ENCODE measurements at regions of chr9 and their contacts with region 1.

Region 1: DNA sequence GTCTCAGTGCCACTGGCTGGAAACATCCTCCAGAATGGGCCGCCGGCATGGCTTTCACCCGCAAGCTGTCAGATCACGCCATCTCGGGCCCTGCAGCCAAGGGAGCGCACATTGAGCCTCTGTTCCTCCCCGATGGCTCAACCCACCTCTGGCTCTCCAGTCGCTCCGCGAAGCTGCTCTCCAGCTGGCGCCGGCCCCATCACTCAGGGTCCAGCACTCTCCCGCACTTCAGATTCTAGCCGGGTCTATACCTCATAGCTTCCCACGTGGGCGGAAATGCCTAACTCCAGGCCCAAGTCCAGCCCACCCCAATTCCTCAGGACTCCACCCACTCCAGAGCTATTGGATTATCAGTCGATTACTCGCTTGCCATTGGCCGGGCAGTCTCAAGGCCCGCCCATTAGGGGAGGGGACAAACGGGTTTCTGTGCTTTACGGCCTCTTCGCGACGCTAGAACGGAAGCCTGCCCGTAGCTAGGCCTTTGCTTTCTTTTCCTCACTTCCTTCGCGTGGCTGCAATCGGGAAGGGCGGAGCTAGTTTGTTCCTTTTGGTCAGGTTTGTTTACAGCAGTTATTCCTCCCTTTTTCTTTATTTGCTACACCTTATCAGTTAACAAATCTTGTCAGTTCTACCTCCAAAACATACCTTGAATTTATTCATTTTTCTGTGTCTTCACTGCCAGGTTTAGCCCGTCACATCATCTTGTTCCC is at the start of gene NOL6:
- DNase-seq: peak; percentile 99
- H3K4me3 Mint-ChIP-seq: peak within 1 kb of the TSS; percentile 95
- H3K27ac Mint-ChIP-seq: peak within 1 kb of the TSS; percentile 93
- H3K4me1 Mint-ChIP-seq: peaks cover 29% of the 10 kb centered on the region
- H3K27me3 Mint-ChIP-seq: no peaks in the 10 kb centered on the region
- total RNA-seq, gene NOL6: 38.2 to 38.6 TPM

Region 2: DNA sequence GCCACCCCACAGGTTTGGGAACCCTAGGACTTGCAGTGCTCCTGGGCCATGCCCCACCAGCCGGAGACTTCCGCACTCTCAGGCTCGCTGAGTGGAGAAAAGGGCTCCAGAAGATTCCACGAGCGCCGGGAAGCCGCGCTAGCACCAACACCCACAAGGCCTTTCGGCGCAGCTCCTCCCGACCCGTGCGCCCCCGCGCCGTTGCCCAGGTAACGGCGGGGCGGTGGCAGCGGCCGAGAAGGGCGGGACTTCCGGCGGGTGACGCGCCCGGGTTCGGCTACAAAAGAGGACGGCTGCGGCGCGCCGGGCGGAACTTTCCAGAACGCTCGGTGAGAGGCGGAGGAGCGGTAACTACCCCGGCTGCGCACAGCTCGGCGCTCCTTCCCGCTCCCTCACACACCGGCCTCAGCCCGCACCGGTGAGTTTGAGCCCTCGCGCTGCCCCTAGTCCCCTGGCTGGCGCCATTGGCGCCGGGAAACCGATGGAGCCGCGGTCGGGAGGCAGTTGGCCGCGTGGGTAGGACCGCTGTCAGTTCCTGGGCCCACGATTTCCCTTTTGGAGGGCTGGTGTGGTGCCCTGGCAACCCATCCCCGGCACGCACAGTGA is 448.7 kb before region 1 on chr9 and contains the start of gene DNAJA1:
- CTCF ChIA-PET with region 1: no interaction called
- intact Hi-C with region 1: loop called (anchors 1 kb)
- DNase-seq: peak; percentile 93
- H3K4me3 Mint-ChIP-seq: peak within 1 kb of the TSS; percentile 95
- H3K27ac Mint-ChIP-seq: peak within 1 kb of the TSS; percentile 94
- H3K4me1 Mint-ChIP-seq: peaks cover 75% of the 10 kb centered on the region
- H3K27me3 Mint-ChIP-seq: no peaks in the 10 kb centered on the region
- total RNA-seq, gene DNAJA1: 110 to 120 TPM

Region 3: DNA sequence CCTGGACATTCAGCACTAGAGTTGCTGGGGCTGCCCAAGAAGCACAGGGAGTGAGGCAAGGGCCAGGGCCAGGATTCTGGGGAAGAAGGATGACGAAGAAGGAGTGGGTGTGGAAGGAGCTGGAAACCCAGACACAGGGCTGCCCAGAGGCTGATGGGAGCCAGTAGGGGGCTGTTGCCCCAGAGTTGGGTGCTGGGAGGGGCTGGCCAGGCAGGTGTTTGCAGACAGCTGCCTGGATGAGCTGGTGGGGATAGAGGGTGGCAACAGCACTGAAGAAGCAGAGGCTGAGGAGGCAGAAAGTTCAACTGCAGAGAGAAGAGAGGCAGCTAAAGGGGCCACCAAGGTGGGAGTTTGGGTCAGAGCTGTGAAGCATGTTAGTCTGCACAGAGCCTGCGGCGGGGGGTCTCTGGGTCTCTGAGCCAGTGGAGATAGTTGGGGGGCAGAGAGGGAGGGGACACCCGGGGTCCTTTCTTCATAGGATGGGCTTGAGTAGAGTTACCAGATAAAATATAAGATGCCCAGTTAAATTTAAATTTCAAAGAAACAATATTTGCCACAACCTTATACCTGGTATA is 68.9 kb before region 1 on chr9:
- CTCF ChIA-PET with region 1: interaction called, 14 read pairs
- intact Hi-C with region 1: no loop called
- DNase-seq: no peak
- H3K4me3 Mint-ChIP-seq: no peak overlapping the region
- H3K27ac Mint-ChIP-seq: no peak overlapping the region
- H3K4me1 Mint-ChIP-seq: no peaks in the 10 kb centered on the region
- H3K27me3 Mint-ChIP-seq: no peaks in the 10 kb centered on the region

Region 4: DNA sequence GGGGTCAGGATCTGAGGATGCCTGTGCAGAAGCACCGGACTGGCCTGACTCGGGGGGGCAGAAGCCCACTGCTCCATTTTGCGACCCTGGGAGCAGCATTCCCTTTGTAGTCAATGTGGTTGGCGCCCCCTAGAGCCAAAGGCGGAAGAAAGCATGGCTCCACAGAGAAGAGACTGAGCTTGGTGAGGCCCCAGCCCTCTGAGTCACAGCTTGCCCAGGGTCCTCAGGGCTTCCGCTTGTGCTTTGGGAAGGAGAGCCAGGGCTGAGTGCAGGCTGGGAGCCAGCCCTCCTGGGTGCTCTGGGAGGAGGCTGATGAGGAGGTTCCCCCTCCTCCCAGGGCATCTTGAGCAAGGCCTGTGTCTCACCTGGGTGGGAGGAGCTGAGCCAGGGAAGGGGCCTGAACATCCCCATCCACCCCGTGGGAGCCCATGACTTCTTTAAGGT is 20.9 kb before region 1 on chr9:
- CTCF ChIA-PET with region 1: interaction called, 159 read pairs
- intact Hi-C with region 1: loop called (anchors 1 kb)
- DNase-seq: peak; percentile 82
- H3K4me3 Mint-ChIP-seq: no peak overlapping the region
- H3K27ac Mint-ChIP-seq: peak overlapping the region; percentile 83
- H3K4me1 Mint-ChIP-seq: peaks cover 72% of the 10 kb centered on the region
- H3K27me3 Mint-ChIP-seq: no peaks in the 10 kb centered on the region

Region 5: DNA sequence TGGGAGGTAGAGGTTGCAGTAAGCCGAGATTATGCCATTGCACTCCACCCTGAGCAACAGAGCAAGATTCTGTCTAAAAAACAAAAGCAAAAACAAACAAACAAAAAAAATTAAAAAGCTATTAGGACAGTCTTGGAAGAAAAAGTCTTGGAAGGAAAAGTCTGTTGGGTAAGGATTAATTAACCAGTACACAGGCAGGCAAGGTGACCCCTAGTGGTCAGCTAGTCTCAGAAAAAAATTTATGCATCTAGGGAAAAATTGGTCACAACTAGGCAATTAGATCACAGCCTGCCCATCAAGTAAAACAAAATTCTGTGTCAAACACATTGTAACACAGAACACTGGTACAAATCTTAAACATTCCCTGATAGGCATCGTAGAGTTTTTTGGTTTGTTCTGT is 43.6 kb after region 1 on chr9:
- CTCF ChIA-PET with region 1: interaction called, 3 read pairs
- intact Hi-C with region 1: loop called (anchors 2 kb)
- DNase-seq: peak; percentile 19
- H3K4me3 Mint-ChIP-seq: no peak overlapping the region
- H3K27ac Mint-ChIP-seq: no peak overlapping the region
- H3K4me1 Mint-ChIP-seq: no peaks in the 10 kb centered on the region
- H3K27me3 Mint-ChIP-seq: peaks cover 12% of the 10 kb centered on the region

Region 6: DNA sequence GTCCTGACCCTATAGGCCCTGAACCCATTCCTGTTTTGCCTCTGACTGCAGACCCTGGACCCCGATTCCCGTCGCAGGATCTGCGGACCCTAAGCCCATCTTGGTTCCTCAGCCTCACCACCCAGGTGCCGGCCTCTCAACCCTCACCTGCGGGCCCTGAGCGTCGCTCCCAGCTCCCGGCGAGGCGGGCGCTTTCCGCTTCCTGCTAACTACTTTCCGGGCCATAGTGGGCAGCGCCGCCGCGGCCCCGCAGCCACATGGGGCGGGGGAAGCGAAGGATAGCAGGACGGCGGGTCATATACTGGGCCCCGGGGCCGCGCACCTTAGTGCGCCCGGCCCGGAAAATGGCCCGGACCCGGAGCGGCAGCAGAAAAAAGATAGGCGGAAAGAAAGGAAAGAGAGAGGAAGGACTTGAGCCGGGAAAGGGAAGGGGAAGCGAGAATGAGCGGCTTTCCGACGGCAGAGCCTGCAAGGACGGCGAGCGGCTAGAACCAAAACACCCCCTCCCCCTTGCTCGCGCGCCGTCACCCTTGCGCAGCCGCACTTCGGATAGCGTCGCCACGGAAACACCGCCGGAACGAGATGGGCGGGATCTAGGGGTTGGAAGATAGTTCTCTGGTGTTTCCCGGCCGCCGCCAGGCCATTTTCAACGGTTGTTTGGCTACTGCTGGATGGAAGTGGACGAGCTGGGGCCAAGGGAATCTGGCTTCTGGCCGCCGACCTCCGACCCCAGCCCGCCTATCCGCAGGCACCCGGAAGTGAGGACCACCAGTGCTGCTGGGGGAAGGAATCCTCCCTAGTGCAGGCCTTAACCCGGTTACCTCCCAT is 652.6 kb after region 1 on chr9 and contains the start of gene DCAF12:
- CTCF ChIA-PET with region 1: no interaction called
- intact Hi-C with region 1: loop called (anchors 5 kb)
- DNase-seq: peak; percentile 94
- H3K4me3 Mint-ChIP-seq: peak within 1 kb of the TSS; percentile 93
- H3K27ac Mint-ChIP-seq: peak within 1 kb of the TSS; percentile 93
- H3K4me1 Mint-ChIP-seq: peaks cover 35% of the 10 kb centered on the region
- H3K27me3 Mint-ChIP-seq: no peaks in the 10 kb centered on the region
- total RNA-seq, gene DCAF12: 34.0 to 37.0 TPM